Posterior cingulate gyrus (tissue), 11 donors: ENCODE measurements at regions of chr11 and their contacts with region 1.

Region 1: DNA sequence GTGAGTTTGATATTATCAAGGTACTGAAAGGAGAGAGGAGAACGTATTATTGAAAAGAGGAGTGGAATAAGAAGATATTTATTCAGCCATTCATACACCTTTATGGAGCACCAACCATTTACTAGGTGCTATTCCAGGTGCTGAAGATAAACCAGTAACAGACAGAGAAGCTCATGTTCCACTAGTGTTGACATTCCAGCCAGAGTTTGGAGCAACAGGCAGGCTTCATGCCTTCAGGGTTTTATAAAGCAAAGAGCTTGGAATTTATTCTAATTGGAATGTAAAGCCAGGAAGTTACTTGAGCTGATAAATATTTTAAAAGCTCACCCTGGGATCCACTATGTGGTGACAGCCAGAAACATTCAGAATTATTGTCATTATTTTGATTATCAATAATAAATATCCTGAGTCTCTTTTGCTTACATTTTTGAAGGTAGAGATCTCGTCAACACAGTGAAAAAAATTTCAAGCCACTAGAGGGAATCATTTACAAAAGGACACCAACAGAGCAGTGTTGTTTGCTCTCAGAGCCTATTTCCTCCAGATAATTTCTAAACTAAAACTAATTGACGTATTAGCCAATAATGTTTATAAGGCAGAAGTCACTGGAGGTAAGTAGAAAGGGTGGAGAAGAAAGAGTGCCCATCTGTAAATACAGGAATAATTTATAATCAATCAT is 172.0 kb downstream of the KCNA4 start:
- DNase-seq: no peak

Region 2: DNA sequence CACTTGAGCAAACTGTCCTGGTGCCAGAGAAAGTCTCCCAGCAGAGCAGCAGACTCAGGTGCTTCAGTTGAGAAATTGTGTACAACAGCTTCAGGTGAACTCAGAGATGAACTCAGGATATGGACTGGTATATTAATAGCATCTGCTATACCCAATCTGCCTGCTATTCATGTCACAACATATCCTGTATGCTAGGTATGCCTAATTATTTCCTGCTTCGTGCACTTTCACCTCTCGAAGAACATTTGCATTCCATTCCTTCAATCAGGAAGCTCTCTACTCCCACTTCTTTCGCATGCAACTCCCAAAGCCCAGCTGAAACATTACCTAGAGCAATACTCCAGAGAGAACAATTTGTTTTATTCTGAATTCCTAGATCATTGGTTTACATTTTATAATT is 35.7 kb before region 1 on chr11:
- intact Hi-C with region 1: loop called (anchors 10 kb)
- DNase-seq: no peak